Sciatic nerve (tissue), 2 donors: ENCODE measurements at regions of chr9 and their contacts with region 1.

Region 1: DNA sequence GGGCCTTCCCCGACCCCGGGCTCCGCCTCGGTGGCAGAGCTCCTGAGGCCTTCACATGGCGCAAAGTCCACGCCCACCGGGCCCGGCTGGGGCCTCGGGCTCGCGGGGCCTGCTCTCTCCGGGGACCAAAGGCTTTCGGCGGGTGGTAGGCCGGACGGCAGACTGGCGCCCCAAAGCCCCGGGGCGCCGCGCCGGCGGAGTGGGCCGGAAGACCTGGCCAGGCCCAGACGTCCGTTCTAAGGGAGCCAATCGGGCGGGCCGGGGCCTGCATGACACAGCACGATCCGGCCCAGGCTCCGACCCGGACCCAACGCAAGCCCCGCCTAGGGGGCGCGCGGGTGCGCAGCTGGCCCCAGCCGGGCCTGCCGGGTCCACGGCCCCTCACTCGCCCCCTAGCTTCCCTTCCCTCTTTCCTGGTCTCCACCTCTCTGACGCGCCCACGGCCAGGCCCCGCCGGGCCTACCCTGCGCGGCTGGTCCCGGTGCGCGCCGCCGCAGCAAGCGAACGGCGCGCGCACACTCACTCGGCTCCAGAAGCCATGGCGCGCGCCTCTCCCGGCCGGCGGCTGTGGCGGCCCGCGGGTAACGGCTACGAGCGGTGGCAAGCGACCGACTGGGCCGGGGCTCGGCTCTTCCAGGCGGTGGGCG is 488 bp downstream of the VCP start:
- DNase-seq: peak; percentile 88
- ATAC-seq: peak; percentile 70

Region 2: GRCh38 chr9:34994260-34994899 is 77.6 kb before region 1 on chr9:
- intact Hi-C with region 1: loop called (anchors 10 kb)
- DNase-seq: no peak
- ATAC-seq: no peak